GM10248 (cell line): ENCODE measurements at regions of chr17 and their contacts with region 1.

Region 1: GRCh38 chr17:42798383-42799380 is at the starts of genes CNTD1 and COA3:
- DNase-seq: peak; percentile 94
- CTCF ChIP-seq: no peak

Region 2: GRCh38 chr17:42809250-42809649 is 10.6 kb after region 1 on chr17:
- CTCF ChIA-PET with region 1: interaction called, 8 read pairs
- POLR2A ChIA-PET with region 1: interaction called, 10 read pairs
- DNase-seq: no peak
- CTCF ChIP-seq: no peak